HepG2 (cell line): ENCODE measurements at regions of chr11 and their contacts with region 1.

Region 1: DNA sequence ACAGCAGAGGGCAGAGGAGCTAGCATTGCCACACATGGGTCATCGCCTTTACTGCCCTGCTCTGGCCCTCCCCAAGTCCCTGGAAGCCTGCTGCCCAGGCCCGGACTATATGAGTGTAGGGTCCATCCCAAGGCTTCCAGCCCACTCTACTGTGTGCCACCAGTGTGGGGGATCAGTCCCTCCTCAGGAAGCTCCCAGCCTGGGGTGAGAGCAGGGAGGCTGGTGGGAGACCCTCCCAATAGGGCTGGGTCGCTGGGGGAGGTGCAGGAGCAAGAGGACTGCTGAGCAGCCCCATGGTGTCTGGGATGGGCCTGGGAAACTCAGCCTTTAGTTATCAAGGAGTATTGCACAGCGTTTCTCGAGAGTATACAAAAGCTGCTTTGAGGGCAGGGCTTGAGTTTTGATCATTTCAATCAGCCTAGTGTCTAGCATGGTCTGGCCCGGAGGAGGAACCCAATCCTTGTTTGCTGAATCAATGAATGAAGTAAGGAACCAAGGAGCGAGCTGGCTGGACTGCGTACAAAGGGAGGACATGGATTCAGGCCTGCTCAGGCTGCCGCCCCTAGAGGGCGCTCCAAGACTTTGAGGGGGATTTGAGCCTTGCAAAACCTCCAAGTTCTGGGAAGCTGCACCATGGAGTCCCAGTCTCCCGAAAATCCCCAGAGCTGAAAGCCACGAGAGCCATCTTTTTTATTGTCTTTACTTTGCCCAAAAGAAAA is 89.0 kb upstream of the PARVA start:
- DNase-seq: peak; percentile 58
- ATAC-seq: peak; percentile 84
- H3K4me3 ChIP-seq: 0 out of 6 replicates have a peak overlapping the region, but pooled peaks of 1 of the 3 experiments have one; percentile 27
- H3K27ac ChIP-seq: no peak overlapping the region
- H3K4me1 ChIP-seq: peaks cover 10% of the 10 kb centered on the region
- H3K27me3 ChIP-seq: peaks cover 0 to 9% of the 10 kb centered on the region in 2 experiments; a peak in 3 of 5 replicates
- CTCF ChIP-seq: peak; percentile 86
- EP300 ChIP-seq: no peak
- POLR2A ChIP-seq: no peak
- RAD21 ChIP-seq: no peak

Region 2: GRCh38 chr11:12893787-12894672 is 605.7 kb after region 1 on chr11:
- CTCF ChIA-PET with region 1: interaction called, 11 read pairs
- POLR2A ChIA-PET with region 1: no interaction called
- in situ Hi-C with region 1: no loop called
- intact Hi-C with region 1: no loop called
- DNase-seq: peak; percentile 39
- ATAC-seq: peak; percentile 82
- H3K4me3 ChIP-seq: no peak overlapping the region
- H3K27ac ChIP-seq: no peak overlapping the region
- H3K4me1 ChIP-seq: no peaks in the 10 kb centered on the region
- H3K27me3 ChIP-seq: no peaks in the 10 kb centered on the region
- CTCF ChIP-seq: peak; percentile 68
- EP300 ChIP-seq: no peak
- POLR2A ChIP-seq: no peak
- RAD21 ChIP-seq: peak; percentile 64; the same call in 1 of the 2 replicates